Dorsolateral prefrontal cortex (tissue), 120 donors: ENCODE measurements at regions of chr9 and their contacts with region 1.

Region 1: GRCh38 chr9:98707166-98708102 is 1.3 kb downstream of the GABBR2 start:
- DNase-seq: peak in 8 of 10 donors; percentile 47 to 89 (median 68)
- H3K4me3 ChIP-seq: peak overlapping the region; percentile 15 to 74 (median 57)
- H3K27ac ChIP-seq: peak overlapping the region in 57 of 59 donors; percentile 4 to 88 (median 75)
- H3K27me3 ChIP-seq: peaks cover 0 to 79% (median 22%) of the 10 kb centered on the region in 45 donors
- CTCF ChIP-seq: peak in 53 of 56 donors; percentile 18 to 67 (median 49)

Region 2: GRCh38 chr9:97938081-97938644 is 769.3 kb before region 1 on chr9 and contains the start of gene HEMGN:
- intact Hi-C with region 1: no loop called
- DNase-seq: no peak
- H3K4me3 ChIP-seq: no peak within 1 kb of the TSS
- H3K27ac ChIP-seq: no peak within 1 kb of the TSS
- H3K27me3 ChIP-seq: peaks cover 0 to 4% (median 0%) of the 10 kb centered on the region in 45 donors
- CTCF ChIP-seq: no peak
- total RNA-seq, gene HEMGN: 0.16 to 1.3 (median 0.32) TPM in 49 of 120 experiments, not detected in the others

Region 3: GRCh38 chr9:98642661-98643312 is 64.6 kb before region 1 on chr9:
- intact Hi-C with region 1: loop called in 1 of 2 experiments (anchors 10 kb)
- DNase-seq: peak in 1 of 10 donors; percentile 35
- H3K4me3 ChIP-seq: no peak overlapping the region
- H3K27ac ChIP-seq: peak overlapping the region in 8 of 59 donors; percentile 4 to 57 (median 32)
- H3K27me3 ChIP-seq: no peaks in the 10 kb centered on the region
- CTCF ChIP-seq: no peak